Aorta (tissue), 5 donors: ENCODE measurements at regions of chr3 and their contacts with region 1.

Region 1: DNA sequence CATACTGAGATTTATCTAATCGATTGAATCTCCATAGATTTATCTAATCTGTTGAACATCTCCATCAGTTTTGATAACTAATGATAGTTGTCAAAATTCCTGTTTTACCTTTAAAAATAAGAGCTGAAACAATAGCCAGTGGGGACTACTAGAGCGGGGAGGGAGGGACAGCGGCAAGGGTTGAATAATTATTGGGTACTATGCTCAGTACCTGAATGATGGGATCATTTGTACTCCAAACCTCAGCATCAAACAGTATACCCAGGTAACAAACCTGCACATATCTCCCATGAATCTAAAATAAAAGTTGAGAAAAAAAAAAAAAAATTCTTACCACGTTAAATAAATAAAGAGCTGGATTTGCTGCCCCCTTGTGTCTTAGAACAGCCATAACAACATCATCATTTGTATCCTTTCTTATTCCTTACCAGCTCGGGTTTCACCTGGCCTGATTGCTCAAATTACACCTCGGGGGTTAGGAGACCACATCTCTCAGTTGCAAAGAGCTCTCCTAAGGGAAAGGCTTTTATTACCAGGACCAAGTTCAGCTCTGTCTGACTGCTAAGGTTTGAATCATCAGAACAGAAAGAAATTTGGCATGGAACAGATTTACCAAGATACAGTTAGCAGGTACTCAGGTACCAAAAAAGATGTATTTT is 25.7 kb upstream of the RPL39L start:
- DNase-seq: no peak
- ATAC-seq: peak; percentile 58
- H3K4me3 ChIP-seq: no peak overlapping the region
- H3K27ac ChIP-seq: no peak overlapping the region
- H3K4me1 ChIP-seq: peaks cover 0 to 3% of the 10 kb centered on the region in 2 donors
- H3K27me3 ChIP-seq: no peaks in the 10 kb centered on the region

Region 2: DNA sequence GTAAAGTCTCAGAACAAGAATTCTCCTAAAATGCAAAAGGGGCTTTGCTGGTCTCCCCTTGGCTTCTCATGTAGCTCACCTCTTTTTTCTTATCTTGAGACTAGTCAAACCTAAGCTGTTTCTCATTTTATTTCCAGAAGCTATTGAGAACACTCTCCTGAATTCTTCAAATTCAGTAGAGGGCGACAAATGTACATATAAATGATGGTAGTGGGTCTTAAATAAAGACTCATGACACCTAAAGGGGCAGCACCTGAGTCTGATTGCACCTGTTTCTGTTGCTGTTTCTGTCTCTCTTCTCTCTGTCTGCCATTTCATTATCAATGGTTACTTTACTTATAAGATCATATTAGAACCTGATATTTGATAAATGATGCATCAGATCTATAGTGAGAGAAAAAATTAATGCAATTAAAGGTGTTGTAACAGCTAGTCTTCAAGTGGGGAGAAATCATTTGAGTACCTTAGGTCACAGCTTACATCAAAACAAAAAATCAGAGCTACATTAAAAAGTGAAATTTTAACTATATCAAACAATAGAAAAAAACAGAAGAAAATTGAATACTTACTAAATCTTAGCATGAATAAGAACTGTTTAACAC is 315.5 kb before region 1 on chr3:
- intact Hi-C with region 1: loop called (anchors 5 to 10 kb)
- DNase-seq: no peak
- ATAC-seq: no peak
- H3K4me3 ChIP-seq: no peak overlapping the region
- H3K27ac ChIP-seq: no peak overlapping the region
- H3K4me1 ChIP-seq: no peaks in the 10 kb centered on the region
- H3K27me3 ChIP-seq: no peaks in the 10 kb centered on the region

Region 3: GRCh38 chr3:187112934-187113793 is 51.9 kb before region 1 on chr3:
- intact Hi-C with region 1: loop called in 1 of 2 experiments (anchors 5 kb)
- DNase-seq: no peak
- ATAC-seq: no peak
- H3K4me3 ChIP-seq: no peak overlapping the region
- H3K27ac ChIP-seq: no peak overlapping the region
- H3K4me1 ChIP-seq: peaks cover 2 to 10% of the 10 kb centered on the region in 2 donors
- H3K27me3 ChIP-seq: no peaks in the 10 kb centered on the region